K562 (cell line): ENCODE measurements at regions of chr14 and their contacts with region 1.

Region 1: DNA sequence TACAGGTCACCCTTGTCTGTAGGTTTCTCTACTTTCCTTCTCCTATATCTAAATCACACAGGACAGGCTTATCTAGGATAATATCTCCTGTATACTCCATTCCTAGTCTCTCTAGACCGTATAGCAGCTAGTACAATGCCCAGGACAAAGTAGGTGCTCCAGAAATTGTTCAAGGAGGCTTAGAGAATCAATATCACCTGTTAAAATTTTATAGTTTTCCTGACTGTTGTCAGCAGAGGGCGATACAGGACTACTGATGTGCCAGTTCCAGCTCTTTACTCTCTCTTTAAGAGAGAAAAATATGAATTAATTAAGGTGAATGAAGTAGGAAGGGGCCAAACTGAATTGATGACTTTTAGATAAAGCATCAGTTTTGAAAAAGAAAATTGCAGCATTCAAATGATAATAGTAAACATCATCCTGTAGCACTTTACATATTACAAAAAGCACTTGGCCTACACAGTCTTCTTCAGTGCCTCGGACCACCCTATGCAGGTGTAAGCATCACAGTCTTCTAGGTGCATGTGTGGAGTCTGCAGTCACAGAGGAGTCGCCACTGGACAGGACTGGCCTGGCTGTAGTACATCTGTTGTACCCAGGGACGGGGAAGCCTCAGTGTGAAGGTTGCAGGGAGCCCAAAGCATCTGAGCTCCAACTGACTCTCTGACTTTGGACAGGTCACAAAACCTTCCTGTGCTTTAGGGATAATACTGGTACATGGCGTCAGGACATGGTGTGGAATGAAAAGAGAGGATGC is 61.9 kb upstream of the MAX start:
- DNase-seq: peak; percentile 35 to 64 (median 36)
- ATAC-seq: peak; percentile 75
- H3K4me3 ChIP-seq: no peak overlapping the region
- H3K27ac ChIP-seq: no peak overlapping the region
- H3K4me1 ChIP-seq: no peaks in the 10 kb centered on the region
- H3K27me3 ChIP-seq: no peaks in the 10 kb centered on the region
- CTCF ChIP-seq: peak; percentile 47 to 76 (median 52); a peak in 5 of 6 replicates
- EP300 ChIP-seq: no peak
- POLR2A ChIP-seq: no peak
- RAD21 ChIP-seq: peak; percentile 87 to 90

Region 2: DNA sequence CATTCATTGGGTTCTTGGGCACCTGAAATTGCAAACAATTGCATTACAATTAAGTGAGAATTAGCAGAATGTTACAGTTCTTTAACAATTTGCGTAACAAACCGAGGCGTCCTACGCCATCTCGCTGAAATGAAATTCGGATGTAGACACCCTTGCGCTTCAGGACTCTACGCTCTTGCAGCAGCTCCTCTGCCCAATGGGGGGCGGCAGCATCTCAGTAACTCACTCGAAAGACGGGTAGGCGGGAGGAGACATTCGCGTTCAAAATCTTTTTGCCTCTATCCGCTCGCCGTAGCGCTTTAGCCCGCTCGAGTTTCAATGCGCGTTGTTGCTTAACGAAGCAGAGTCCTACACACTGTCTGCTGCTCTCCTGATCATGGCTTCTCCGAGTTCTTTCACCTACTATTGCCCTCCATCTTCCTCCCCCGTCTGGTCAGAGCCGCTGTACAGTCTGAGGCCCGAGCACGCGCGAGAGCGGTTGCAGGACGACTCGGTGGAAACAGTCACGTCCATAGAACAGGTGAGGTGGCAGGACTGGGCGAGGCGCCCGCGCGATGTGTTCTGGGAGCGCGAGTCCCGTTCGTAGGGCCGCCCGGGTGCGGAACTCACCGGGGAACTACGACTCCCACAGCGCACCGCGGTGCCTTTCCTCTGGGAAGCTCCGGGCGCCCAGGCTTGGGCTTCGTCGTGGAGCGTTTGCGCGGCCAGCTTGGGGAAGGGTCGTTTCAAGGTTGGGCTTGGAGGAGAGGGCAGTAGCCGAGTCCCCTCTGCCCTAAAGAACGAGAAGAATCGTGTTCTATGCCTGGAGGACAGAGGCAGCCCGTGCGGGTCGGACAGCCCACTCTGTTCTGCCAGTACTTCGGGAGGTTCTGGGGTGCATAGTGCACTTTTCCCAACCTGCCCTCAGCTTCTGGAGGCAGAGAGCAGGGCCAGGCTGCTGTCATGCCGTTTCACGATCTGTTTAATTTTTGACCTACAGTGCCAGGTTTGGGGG is 177.4 kb before region 1 on chr14 and contains the start of gene FNTB:
- CTCF ChIA-PET with region 1: no interaction called
- POLR2A ChIA-PET with region 1: no interaction called
- in situ Hi-C with region 1: no loop called
- intact Hi-C with region 1: loop called (anchors 2 kb)
- DNase-seq: peak; percentile 86 to 93 (median 88)
- ATAC-seq: peak; percentile 99
- H3K4me3 ChIP-seq: peak within 1 kb of the TSS; percentile 67
- H3K27ac ChIP-seq: peak within 1 kb of the TSS; percentile 83
- H3K4me1 ChIP-seq: peaks cover 0 to 4% of the 10 kb centered on the region in 2 experiments; a peak in 3 of 5 replicates
- H3K27me3 ChIP-seq: no peaks in the 10 kb centered on the region; a peak in 1 of 5 replicates
- CTCF ChIP-seq: peak; percentile 82 to 94 (median 93)
- EP300 ChIP-seq: 0 out of 2 replicates have a peak, but pooled peaks have one; percentile 34
- POLR2A ChIP-seq: peak; percentile 84
- RAD21 ChIP-seq: peak; percentile 84 to 94
- polyA plus RNA-seq, gene FNTB: 14.1 to 23.2 TPM

Region 3: DNA sequence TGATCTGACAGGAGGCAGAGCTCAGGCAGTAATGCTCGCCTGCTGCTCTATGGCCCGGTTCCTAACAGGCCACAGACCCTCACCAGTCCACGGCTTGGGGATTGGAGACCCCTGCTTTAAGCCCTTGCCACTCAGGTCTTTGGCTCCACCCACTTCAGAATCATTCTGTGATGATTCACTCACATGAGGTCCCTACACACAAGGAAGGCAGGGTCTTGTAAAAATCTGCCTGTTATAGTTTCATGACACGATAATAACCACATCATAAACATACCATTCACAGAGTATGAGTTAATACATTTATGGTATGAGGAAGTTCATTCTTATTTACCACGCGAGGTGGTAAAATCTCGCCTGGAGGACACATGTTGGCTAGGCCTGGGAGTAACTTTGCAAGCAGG is 32.9 kb before region 1 on chr14:
- CTCF ChIA-PET with region 1: no interaction called
- POLR2A ChIA-PET with region 1: no interaction called
- in situ Hi-C with region 1: no loop called
- intact Hi-C with region 1: no loop called
- DNase-seq: no peak
- ATAC-seq: no peak
- H3K4me3 ChIP-seq: no peak overlapping the region
- H3K27ac ChIP-seq: no peak overlapping the region
- H3K4me1 ChIP-seq: peaks cover 0 to 6% of the 10 kb centered on the region in 2 experiments; a peak in 3 of 5 replicates
- H3K27me3 ChIP-seq: no peaks in the 10 kb centered on the region
- CTCF ChIP-seq: no peak
- EP300 ChIP-seq: no peak
- POLR2A ChIP-seq: no peak
- RAD21 ChIP-seq: no peak

Region 4: GRCh38 chr14:65501328-65501727 is 337.1 kb after region 1 on chr14:
- CTCF ChIA-PET with region 1: no interaction called
- POLR2A ChIA-PET with region 1: no interaction called
- in situ Hi-C with region 1: no loop called
- intact Hi-C with region 1: no loop called
- DNase-seq: no peak
- ATAC-seq: peak; percentile 59
- H3K4me3 ChIP-seq: no peak overlapping the region
- H3K27ac ChIP-seq: no peak overlapping the region
- H3K4me1 ChIP-seq: no peaks in the 10 kb centered on the region
- H3K27me3 ChIP-seq: no peaks in the 10 kb centered on the region
- CTCF ChIP-seq: no peak
- EP300 ChIP-seq: no peak
- POLR2A ChIP-seq: no peak
- RAD21 ChIP-seq: no peak

Region 5: DNA sequence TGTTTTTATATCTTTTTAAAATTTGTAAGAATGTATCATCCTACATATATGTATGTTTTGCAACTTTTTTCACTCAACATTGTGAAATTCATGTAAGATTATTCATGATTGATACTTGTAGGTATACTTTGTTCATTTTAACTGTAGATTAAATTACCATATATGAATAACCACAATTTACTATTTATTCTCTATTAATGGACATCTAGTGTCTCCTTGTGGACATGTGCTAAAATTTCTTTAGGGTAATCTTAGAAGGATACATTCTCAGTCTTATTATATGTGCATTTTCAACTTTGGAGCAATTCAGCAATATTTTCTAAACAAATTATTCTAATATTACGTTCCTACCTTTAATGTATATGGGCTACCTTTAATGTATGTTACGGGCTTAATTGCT is 440.7 kb after region 1 on chr14:
- CTCF ChIA-PET with region 1: no interaction called
- POLR2A ChIA-PET with region 1: no interaction called
- in situ Hi-C with region 1: no loop called
- intact Hi-C with region 1: loop called (anchors 5 kb)
- DNase-seq: no peak
- ATAC-seq: no peak
- H3K4me3 ChIP-seq: no peak overlapping the region
- H3K27ac ChIP-seq: no peak overlapping the region
- H3K4me1 ChIP-seq: no peaks in the 10 kb centered on the region
- H3K27me3 ChIP-seq: no peaks in the 10 kb centered on the region
- CTCF ChIP-seq: peak in 1 of 3 experiments; percentile 52; a peak in 2 of 6 replicates
- EP300 ChIP-seq: no peak
- POLR2A ChIP-seq: no peak
- RAD21 ChIP-seq: peak; percentile 51 to 62

Region 6: DNA sequence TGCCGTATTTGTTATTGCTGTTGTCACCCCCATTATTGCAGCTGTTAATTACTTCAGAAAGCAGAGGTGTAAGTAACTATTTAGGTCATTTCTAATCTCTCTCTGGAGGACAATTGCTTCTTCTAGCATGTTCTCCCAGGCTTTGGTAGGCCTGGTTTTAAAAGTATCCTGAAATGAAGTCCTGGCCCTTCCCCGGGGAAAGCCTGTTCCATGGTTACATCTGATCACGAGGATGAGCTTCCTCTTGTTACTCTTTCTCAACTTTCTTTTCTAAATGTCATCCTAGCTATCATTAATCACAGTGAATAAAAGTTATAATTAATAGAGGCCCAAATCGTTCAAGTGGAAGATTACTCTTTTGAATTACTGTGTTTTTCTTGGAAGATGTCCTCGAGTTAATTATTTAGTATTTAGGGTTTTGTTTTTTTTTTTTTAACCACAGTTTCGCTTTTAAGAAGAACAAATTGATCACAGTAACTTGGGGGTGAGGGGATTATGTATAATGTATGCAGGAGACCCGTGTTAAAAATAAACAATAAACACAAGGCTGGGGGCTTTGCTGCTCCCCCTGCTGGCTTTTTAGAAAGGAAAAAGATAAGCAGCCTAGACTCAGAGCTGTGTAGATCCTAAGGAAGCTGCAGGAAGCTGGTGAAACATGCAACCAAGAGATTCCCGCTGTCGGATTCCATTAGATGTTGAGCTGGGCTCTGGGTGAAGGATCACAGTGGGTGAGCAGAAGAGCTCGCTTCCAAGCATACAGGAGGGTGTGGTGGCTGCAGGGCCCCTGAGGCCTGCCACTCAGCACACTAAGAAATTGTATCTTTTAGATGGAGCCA is 668.4 kb after region 1 on chr14:
- CTCF ChIA-PET with region 1: no interaction called
- POLR2A ChIA-PET with region 1: no interaction called
- in situ Hi-C with region 1: loop called (anchors 25 kb)
- intact Hi-C with region 1: loop called (anchors 10 kb)
- DNase-seq: no peak
- ATAC-seq: peak; percentile 37; the same call in 1 of the 3 replicates
- H3K4me3 ChIP-seq: no peak overlapping the region
- H3K27ac ChIP-seq: no peak overlapping the region
- H3K4me1 ChIP-seq: no peaks in the 10 kb centered on the region
- H3K27me3 ChIP-seq: peaks cover 3 to 28% of the 10 kb centered on the region in 2 experiments; a peak in 3 of 5 replicates
- CTCF ChIP-seq: peak; percentile 11 to 22 (median 20); a peak in 2 of 6 replicates
- EP300 ChIP-seq: no peak
- POLR2A ChIP-seq: no peak
- RAD21 ChIP-seq: peak in 1 of 2 experiments; percentile 15; a peak in 2 of 4 replicates

Region 7: DNA sequence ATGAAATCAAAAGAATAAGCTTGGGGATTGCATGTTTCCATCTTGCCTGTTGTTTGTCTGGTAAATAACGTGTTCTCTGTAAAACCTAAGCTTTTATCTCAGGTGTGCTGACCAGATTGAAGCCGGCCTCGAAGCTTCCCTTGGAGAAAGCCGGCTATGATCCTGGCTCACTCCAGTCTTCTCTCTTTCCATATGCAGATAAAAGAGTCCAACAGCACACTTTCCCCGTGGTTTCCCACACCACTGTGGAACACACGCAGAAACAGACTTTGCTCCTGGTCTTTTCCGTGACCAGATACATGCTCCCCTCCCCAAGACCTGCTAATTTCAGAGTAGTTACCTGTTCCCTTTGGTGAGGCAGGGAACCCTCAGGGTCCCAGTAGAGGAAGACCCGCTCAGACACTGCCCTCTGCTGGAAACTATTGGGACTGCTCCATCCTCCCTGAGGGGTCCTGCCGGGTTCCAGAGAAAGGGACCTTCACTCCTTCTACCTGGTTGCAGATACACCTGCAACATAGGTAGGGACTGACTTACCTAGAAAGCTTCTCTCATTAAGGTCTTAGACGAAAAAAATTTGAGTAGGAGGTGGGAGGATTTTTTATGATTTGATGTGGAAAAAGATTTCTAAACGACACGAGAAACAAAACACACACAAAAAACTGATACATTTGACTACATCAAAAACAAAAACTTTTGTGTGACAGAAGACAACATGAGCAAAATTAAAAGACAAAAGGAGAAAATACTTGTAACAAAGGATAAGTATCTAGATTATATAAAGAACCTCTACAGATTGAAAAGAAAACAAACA is 906.5 kb after region 1 on chr14:
- CTCF ChIA-PET with region 1: no interaction called
- POLR2A ChIA-PET with region 1: no interaction called
- in situ Hi-C with region 1: loop called (anchors 25 kb)
- intact Hi-C with region 1: loop called (anchors 10 kb)
- DNase-seq: peak; percentile 47 to 76 (median 70)
- ATAC-seq: peak; percentile 88
- H3K4me3 ChIP-seq: no peak overlapping the region
- H3K27ac ChIP-seq: no peak overlapping the region
- H3K4me1 ChIP-seq: no peaks in the 10 kb centered on the region
- H3K27me3 ChIP-seq: no peaks in the 10 kb centered on the region
- CTCF ChIP-seq: peak; percentile 60 to 78 (median 68)
- EP300 ChIP-seq: no peak
- POLR2A ChIP-seq: no peak
- RAD21 ChIP-seq: peak; percentile 48 to 68; a peak in 3 of 4 replicates